SK-N-SH (cell line): ENCODE measurements at regions of chr16 and their contacts with region 1.

Region 1: DNA sequence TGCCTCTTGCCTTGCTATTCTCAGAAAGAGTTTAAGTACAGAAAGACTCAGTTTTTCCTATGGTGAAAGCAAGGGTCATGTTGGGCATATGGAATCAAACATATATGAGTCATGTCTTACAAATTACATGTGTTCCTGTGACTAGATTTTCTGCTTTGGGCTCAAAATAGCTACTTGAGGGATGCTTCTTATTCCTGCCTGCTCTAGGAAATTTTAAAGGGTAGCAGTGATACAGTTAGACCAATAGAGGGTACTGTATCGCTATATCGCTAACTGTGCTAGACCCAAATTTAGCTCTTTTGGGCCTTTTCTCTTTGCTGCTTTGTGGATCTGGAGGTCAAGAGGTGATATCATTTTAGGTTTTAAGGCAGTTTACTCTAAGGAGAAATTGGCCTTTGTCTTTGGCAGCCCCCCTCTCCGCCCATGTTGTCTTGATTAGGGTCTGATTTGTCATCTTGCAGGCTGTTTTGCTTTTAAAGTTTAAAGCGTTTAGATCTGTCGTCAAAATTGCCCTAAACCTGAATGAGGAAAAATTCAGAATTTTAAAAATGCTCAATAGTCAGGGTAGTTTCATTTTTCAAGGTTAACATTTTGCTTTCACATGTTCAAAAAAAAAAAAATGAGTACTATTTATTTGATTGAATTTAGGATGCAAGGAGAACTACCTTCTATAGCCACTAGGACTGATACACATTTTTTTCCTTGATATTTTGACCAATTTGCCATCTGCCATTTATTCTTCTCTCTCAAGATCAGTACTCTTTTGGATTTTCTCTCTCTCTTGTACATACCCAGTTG is 8.8 kb downstream of the NFATC3 start:
- DNase-seq: no peak
- H3K4me3 ChIP-seq: no peak overlapping the region
- H3K27ac ChIP-seq: no peak overlapping the region
- H3K4me1 ChIP-seq: peaks cover 8 to 38% of the 10 kb centered on the region in 2 experiments
- H3K27me3 ChIP-seq: no peaks in the 10 kb centered on the region
- CTCF ChIP-seq: peak; percentile 57
- EP300 ChIP-seq: no peak
- RAD21 ChIP-seq: peak; percentile 71

Region 2: GRCh38 chr16:68079626-68080344 is 14.2 kb before region 1 on chr16:
- CTCF ChIA-PET with region 1: interaction called, 18 read pairs
- POLR2A ChIA-PET with region 1: interaction called, 7 read pairs
- DNase-seq: no peak
- H3K4me3 ChIP-seq: no peak overlapping the region
- H3K27ac ChIP-seq: no peak overlapping the region
- H3K4me1 ChIP-seq: peaks cover 6 to 10% of the 10 kb centered on the region in 2 experiments; a peak in 1 of 4 replicates
- H3K27me3 ChIP-seq: no peaks in the 10 kb centered on the region
- CTCF ChIP-seq: no peak
- EP300 ChIP-seq: no peak
- RAD21 ChIP-seq: no peak

Region 3: DNA sequence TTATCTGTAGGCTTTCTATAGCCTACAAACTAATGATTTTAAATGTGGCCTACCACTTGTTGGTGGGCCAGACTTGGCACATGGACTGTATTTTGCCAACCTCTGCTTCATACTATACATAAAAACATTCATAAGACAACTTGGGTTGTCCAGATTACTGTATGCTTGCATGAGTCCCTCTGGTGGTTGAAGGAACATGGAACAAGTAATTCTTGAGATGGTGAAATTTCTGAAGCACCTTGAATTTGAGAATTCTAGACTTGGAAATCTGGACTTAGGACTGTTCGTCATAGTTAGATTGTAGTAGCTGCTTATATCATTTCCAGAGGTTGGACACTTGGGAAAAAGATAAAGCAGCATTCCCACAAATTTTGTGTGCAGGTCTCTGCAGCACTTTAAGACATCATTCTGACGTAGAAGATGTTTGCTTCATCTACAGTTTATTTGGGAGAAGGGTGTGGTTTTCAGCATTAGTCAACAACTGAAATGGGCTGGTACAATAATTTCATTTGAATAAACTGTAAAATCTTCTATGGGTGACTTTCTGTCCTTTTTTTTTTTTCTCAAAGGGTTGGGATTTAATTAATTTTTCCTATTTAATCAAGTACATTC is 22.3 kb after region 1 on chr16:
- CTCF ChIA-PET with region 1: interaction called, 11 read pairs
- POLR2A ChIA-PET with region 1: no interaction called
- DNase-seq: no peak
- H3K4me3 ChIP-seq: no peak overlapping the region; a peak in 1 of 4 replicates
- H3K27ac ChIP-seq: no peak overlapping the region
- H3K4me1 ChIP-seq: no peaks in the 10 kb centered on the region
- H3K27me3 ChIP-seq: no peaks in the 10 kb centered on the region
- CTCF ChIP-seq: peak; percentile 64
- EP300 ChIP-seq: no peak
- RAD21 ChIP-seq: no peak; the same call in 1 of the 2 replicates

Region 4: GRCh38 chr16:68223072-68223471 is 129.1 kb after region 1 on chr16:
- CTCF ChIA-PET with region 1: interaction called, 98 read pairs
- POLR2A ChIA-PET with region 1: no interaction called
- DNase-seq: no peak
- H3K4me3 ChIP-seq: no peak overlapping the region
- H3K27ac ChIP-seq: peak overlapping the region in 1 of 2 experiments; percentile 56; a peak in 2 of 4 replicates
- H3K4me1 ChIP-seq: peaks cover 0 to 23% of the 10 kb centered on the region in 2 experiments; a peak in 2 of 4 replicates
- H3K27me3 ChIP-seq: no peaks in the 10 kb centered on the region
- CTCF ChIP-seq: no peak
- EP300 ChIP-seq: 0 out of 4 replicates have a peak, but pooled peaks of 1 of the 2 experiments have one; percentile 41
- RAD21 ChIP-seq: no peak

Region 5: DNA sequence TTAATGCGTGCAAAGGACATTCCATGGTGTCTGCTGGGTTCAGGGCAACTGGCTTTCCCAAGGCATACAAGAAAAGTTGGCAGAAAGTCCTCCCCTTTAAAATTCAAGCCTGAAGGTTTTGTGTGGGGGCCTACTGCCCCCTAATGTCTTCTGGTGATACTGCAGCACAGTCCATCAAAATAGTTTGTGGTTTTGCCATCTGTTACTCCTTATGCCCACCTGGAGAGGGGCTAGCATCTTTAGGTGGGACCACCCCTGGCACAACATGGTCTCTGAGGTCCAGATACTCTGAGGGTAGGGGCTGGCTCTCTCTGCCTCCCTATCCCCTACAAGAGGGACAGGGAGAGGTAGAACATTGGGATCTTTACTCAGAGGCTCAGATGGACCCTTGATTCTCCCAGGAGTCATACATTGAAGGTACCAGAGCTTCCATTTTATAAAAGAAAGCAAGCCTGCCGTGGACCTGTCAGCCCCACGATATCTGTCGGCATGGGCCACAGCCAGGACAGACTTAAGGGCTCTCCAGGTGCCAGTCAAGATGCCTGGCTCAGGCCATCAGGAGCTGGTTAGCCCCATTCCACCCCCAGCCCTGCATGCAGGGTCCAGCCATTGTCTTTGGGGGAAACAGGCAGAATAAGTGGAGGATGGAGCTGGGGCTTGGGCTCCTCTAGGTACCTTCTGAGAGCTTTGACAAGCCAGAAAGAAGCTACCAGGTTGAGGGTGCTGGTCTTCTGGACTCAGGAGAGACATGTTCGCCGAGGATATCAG is 135.6 kb after region 1 on chr16:
- CTCF ChIA-PET with region 1: interaction called, 98 read pairs
- POLR2A ChIA-PET with region 1: no interaction called
- DNase-seq: peak; percentile 69
- H3K4me3 ChIP-seq: peak overlapping the region in 1 of 2 experiments; percentile 27; a peak in 1 of 4 replicates
- H3K27ac ChIP-seq: no peak overlapping the region
- H3K4me1 ChIP-seq: peaks cover 0 to 25% of the 10 kb centered on the region in 2 experiments; a peak in 2 of 4 replicates
- H3K27me3 ChIP-seq: no peaks in the 10 kb centered on the region
- CTCF ChIP-seq: peak; percentile 91
- EP300 ChIP-seq: no peak
- RAD21 ChIP-seq: peak; percentile 94

Region 6: GRCh38 chr16:68237243-68238028 is 143.4 kb after region 1 on chr16:
- CTCF ChIA-PET with region 1: interaction called, 17 read pairs
- POLR2A ChIA-PET with region 1: no interaction called
- DNase-seq: peak; percentile 99
- H3K4me3 ChIP-seq: peak overlapping the region; percentile 52 to 57
- H3K27ac ChIP-seq: peak overlapping the region; percentile 86 to 87
- H3K4me1 ChIP-seq: peaks cover 0 to 8% of the 10 kb centered on the region in 2 experiments; a peak in 1 of 4 replicates
- H3K27me3 ChIP-seq: no peaks in the 10 kb centered on the region
- CTCF ChIP-seq: no peak
- EP300 ChIP-seq: peak; percentile 16 to 49; a peak in 1 of 4 replicates
- RAD21 ChIP-seq: no peak